Mucosa of descending colon (tissue), 3 donors: ENCODE measurements at regions of chr6 and their contacts with region 1.

Region 1: GRCh38 chr6:88982720-88983119 is 19.3 kb upstream of the RNGTT start:
- DNase-seq: peak in 1 of 3 donors; percentile 33
- ATAC-seq: peak; percentile 93
- H3K4me3 ChIP-seq: no peak overlapping the region
- H3K4me1 ChIP-seq: no peaks in the 10 kb centered on the region
- CTCF ChIP-seq: peak; percentile 29

Region 2: DNA sequence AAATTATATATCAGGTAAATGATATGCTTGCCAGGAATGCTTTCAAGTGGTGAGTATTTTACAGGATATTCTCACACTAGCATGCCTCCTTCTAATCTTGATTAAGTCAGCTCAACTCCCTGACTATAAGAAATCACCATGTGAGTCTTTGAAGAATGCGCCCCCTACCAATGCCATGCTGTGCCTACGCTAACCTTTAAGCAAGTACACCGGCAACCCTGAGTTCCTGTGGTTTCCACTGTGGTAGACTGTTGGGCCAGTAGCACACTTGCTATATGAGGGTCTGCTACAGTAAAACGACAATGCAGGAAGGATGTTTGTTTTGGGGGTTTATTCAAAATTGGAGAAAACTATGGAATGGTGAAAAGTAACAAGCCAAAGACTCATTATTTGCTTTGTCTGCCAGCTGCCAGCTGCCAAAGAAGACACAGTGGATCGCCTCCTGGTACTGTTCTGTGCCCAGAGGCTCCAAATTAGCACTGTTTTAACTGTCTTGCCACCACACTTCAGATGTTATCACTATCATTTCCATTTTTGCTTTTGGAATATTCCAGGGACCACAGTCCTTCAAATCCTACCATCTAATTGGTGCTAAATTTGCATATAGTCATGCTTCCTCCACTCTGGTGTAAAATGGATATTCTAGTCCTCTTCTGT is 352.8 kb before region 1 on chr6:
- intact Hi-C with region 1: no loop called
- DNase-seq: peak in 1 of 3 donors; percentile 11
- ATAC-seq: no peak
- H3K4me3 ChIP-seq: no peak overlapping the region
- H3K4me1 ChIP-seq: no peaks in the 10 kb centered on the region
- CTCF ChIP-seq: no peak

Region 3: GRCh38 chr6:89098461-89098860 is 115.7 kb after region 1 on chr6:
- intact Hi-C with region 1: no loop called
- DNase-seq: no peak
- ATAC-seq: no peak
- H3K4me3 ChIP-seq: no peak overlapping the region
- H3K4me1 ChIP-seq: no peaks in the 10 kb centered on the region
- CTCF ChIP-seq: no peak

Region 4: DNA sequence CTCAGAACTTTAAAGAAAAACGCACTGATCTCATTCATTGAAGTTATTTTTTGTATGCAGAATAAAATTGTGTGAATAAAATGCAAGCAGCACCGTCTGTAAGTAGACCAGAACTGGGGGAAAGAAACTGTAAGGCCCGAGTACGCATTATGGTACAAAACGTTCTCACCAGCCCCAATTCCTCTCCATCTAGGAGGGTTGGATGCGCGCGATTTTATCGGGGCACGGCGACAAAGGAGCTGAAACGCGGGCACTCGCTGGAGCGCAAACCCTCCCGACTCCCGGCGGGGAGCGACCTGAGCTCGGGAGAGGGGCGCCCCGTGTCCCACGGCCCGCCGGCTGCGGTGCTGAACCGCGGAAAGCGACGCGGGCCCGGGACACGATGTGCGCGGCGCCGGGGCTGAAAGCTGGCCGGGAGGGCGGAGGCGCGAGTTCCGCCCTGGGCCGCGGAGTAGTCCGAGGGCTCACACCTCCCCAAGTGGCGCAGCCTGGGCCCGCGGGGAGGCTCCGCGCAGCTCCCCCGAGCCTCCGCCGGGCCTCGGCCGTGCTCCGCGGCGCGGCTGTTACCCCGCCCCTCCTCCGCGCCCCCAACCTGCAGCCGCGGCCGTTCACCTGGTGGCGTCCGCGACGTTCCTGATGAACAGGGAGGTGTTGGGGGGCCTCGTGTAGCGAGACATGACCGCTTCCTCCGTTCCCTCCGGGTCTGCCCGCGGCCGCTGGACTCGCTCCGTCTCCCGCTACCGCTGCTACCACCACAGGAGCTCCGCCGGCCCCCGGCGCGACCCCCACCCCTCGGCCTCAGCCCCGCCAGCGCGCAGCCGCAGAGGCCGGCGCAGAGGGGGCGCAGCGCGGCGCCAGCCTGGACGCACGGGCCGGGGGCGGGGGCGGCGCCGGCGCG is 134.7 kb after region 1 on chr6 and contains the start of gene SRSF12:
- intact Hi-C with region 1: loop called in 1 of 2 experiments (anchors 10 kb)
- DNase-seq: peak; percentile 38 to 55 (median 52)
- ATAC-seq: peak; percentile 89
- H3K4me3 ChIP-seq: no peak within 1 kb of the TSS
- H3K4me1 ChIP-seq: peaks cover 4% of the 10 kb centered on the region
- CTCF ChIP-seq: no peak
- total RNA-seq, gene SRSF12: 0.12 to 0.51 TPM in 2 of 3 donors, not detected in the other

Region 5: DNA sequence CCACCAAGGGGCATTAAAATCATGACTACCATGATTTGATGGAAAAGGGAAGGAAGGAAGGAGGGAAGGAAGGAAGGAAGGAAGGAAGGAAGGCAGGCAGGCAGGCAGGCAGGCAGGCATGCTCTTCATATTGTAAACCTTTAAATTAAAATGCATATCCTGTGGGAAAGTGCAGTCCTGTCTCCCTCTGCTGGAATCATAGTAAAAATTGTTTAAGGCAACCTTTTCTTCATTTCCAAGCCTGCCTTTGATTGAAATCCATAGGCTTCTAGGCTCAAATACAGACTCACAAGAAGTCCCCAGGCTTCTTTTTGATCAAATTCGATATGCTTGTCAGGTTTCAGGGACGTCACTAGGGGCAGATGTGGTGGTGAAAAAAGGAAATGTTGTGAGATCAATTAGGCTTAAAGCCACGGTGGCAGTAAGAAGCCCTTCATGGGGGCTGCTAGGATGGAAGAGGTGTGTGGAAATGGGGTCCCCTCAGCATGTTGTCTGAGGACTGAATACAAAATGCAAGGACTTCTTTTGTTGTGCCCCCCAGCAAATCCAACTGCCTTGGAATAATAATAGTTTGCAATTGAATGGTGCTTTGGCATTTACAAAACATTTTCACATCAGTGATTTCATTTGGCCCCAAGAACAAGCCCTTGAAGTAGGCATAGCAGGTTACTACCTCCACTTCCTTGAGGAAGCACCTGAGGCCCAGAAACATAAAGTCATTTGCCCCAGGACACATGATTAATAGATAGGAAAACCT is 260.0 kb after region 1 on chr6:
- intact Hi-C with region 1: loop called (anchors 5 to 10 kb)
- DNase-seq: no peak
- ATAC-seq: peak; percentile 63
- H3K4me3 ChIP-seq: no peak overlapping the region
- H3K4me1 ChIP-seq: no peaks in the 10 kb centered on the region
- CTCF ChIP-seq: no peak